HEK293 (cell line): ENCODE measurements at regions of chr10 and their contacts with region 1.

Region 1: GRCh38 chr10:97072851-97073665 is 112.7 kb downstream of the SLIT1 start:
- H3K4me3 ChIP-seq: no peak overlapping the region
- H3K27ac ChIP-seq: no peak overlapping the region
- H3K4me1 ChIP-seq: no peaks in the 10 kb centered on the region
- CTCF ChIP-seq: peak; percentile 76

Region 2: DNA sequence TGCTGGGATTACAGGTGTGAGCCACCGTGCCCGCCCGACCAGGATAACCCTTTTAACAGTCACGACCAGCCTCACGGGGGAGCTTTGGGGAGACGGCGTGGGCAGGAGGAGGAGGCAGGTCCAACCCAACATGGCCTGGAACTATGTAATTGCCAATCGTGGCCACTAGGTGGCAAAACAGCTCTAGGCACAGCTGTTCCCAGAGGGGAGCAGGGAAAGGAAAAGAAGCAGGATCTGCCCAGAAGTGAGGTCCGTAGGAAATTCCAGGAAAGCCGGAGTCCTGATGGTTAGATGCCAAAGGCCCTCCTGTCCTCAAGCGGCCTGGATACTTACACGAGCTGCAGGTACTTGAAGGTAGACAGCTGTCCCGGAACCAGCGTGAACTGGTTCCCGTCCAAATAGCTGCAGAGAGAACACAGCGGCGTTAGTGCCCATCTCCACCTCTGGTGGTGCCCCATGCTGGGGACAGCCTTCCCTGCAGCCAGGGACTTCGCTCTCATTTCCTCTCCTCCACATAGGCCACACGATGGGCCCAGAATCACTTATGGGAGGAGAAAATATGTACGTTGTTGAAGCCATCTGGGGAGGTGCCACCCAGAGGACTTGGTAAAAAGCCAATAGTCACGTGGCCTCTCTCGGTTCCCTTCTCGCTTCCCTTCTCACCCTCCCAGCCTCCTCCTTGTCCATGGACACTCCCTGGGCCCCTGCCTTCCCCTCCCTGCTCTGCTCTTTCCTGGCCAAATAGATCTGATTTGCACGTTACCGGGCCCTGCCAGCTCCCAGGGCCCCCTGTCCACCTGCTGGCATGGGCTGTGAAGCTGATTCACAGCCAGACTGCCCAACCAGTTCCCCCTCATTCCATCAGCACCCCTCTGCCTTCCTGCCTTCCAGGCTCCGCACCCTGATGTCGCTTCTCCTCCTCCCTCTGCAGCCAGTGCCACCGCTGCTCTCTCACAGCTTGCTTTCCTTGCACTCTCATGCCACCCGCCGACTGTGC is 35.4 kb before region 1 on chr10:
- CTCF ChIA-PET with region 1: interaction called, 25 read pairs
- POLR2A ChIA-PET with region 1: no interaction called
- H3K4me3 ChIP-seq: no peak overlapping the region
- H3K27ac ChIP-seq: no peak overlapping the region
- H3K4me1 ChIP-seq: no peaks in the 10 kb centered on the region
- CTCF ChIP-seq: peak; percentile 96

Region 3: DNA sequence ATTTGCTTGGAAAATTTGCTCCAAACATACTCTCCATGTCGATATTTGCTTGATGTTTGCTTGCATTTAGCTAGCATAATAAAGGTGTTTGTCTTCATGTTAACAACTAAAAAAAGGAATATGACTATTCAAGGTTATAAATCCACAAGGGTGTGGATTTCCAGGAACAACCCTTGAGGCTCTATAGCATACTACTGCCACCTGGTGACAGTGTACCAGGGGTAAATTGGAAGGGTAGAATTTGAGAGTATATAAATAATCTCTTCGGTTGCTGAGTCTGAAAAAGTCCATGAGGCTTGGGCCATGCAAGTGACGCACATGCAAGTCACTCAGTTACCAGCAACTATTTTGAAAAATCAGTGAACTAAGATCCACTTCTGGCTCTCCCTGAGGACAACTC is 44.3 kb after region 1 on chr10:
- CTCF ChIA-PET with region 1: interaction called, 26 read pairs
- POLR2A ChIA-PET with region 1: no interaction called
- H3K4me3 ChIP-seq: no peak overlapping the region
- H3K27ac ChIP-seq: no peak overlapping the region
- H3K4me1 ChIP-seq: no peaks in the 10 kb centered on the region
- CTCF ChIP-seq: 0 out of 2 replicates have a peak, but pooled peaks have one; percentile 12

Region 4: DNA sequence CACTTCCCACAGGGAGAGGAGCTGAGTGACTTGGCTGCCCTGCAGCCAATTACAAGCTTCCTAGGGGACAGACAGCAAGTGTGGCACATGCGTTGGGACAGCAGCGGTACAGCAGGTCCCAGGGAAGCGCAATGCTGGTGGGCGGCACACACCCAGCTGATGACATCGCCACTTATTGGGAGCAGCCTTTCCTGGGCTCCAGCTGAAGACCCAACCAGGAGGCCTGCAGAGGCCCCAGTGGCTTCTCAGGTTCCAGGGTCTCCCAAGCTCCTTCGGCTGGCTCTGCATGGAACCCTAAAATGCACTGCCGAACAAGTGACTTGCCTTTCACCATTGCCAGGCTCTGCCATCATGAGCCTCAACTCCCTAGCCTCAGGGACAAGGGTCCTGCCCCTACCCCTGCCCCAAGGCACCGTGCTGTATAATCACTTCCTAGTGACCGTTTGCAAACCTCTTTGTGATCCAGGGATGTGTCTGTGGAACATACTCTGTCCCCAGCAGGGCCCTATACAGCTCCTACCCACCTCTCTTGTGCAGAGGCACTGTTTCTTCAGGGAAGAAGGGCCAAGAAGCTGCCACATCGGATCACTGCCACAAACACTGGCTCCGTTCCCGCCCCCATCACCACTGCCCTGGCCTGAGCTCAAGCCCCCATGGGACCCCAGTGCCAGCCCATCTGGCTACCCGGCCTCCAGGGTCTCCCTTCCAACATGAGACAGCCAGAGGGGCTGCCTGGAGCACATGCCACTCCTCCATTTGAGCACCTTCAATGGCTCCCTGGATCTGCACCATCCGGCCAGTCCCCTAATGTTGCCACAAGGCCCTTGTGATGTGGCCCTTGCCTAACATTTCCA is 132.0 kb after region 1 on chr10:
- CTCF ChIA-PET with region 1: interaction called, 188 read pairs
- POLR2A ChIA-PET with region 1: no interaction called
- H3K4me3 ChIP-seq: no peak overlapping the region
- H3K27ac ChIP-seq: no peak overlapping the region
- H3K4me1 ChIP-seq: no peaks in the 10 kb centered on the region
- CTCF ChIP-seq: no peak

Region 5: GRCh38 chr10:97222326-97222961 is 149.4 kb after region 1 on chr10:
- CTCF ChIA-PET with region 1: interaction called, 11 read pairs
- POLR2A ChIA-PET with region 1: no interaction called
- H3K4me3 ChIP-seq: no peak overlapping the region
- H3K27ac ChIP-seq: no peak overlapping the region
- H3K4me1 ChIP-seq: no peaks in the 10 kb centered on the region
- CTCF ChIP-seq: 0 out of 2 replicates have a peak, but pooled peaks have one; percentile 24

Region 6: GRCh38 chr10:97278491-97278989 is 205.5 kb after region 1 on chr10:
- CTCF ChIA-PET with region 1: interaction called, 12 read pairs
- POLR2A ChIA-PET with region 1: no interaction called
- H3K4me3 ChIP-seq: no peak overlapping the region
- H3K27ac ChIP-seq: no peak overlapping the region
- H3K4me1 ChIP-seq: peaks cover 5% of the 10 kb centered on the region; the same call in 1 of the 2 replicates
- CTCF ChIP-seq: 0 out of 2 replicates have a peak, but pooled peaks have one; percentile 9